Mammary epithelial cell (primary cell): ENCODE measurements at regions of chr1 and their contacts with region 1.

Region 1: GRCh38 chr1:150176593-150176992 is 26.9 kb downstream of the PLEKHO1 start:
- DNase-seq: no peak
- H3K4me3 ChIP-seq: no peak overlapping the region
- H3K27ac ChIP-seq: no peak overlapping the region
- H3K4me1 ChIP-seq: no peaks in the 10 kb centered on the region
- H3K27me3 ChIP-seq: no peaks in the 10 kb centered on the region
- CTCF ChIP-seq: no peak

Region 2: DNA sequence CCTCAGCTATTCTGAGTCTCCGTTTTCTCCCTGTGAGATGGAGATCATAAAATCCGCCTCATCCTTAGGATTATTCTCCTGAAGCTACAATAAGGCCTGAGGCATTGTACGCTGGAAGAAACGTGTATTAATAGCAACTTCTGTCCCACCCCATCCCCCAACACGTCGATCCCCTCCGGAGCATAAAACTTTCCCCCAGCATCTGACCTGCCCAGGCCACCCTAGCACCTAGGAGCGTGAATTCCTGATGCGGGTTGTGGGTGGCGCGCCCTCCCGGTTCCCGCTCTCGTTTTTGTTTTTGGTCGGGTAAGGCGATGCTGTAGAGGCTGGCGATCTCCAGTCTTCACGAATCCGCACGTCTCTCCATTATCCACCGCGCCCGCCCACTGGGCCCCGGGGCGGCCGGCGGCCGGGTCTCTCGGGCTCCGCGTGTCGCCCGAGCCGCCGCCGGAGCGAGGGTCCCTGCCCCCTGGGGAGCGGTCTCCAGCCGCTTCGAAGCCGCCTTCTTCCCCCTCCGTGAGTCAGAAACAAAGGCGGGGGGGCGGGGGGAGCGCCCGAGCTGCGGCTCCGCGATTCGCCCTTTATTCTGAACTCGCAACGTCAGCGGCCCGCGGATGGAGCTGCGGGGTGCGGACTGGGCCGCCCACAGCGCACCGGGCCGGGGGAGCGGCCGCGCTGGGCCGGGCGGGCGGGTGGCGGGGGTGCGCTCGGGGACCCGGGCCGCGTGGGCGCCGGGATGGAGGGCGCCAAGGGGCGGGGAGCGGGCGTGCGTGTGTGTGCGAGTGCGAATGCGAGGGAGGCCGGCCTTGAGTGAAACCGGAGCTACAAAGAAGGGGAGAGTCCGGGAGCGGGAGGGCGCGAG is 27.1 kb before region 1 on chr1 and contains the start of gene PLEKHO1:
- CTCF ChIA-PET with region 1: no interaction called
- dilution Hi-C with region 1: loop called (anchors 5 kb)
- in situ Hi-C with region 1: no loop called
- intact Hi-C with region 1: no loop called
- DNase-seq: peak; percentile 71
- H3K4me3 ChIP-seq: peak within 1 kb of the TSS; percentile 58 to 61 (median 60)
- H3K27ac ChIP-seq: no peak within 1 kb of the TSS
- H3K4me1 ChIP-seq: peaks cover 7% of the 10 kb centered on the region
- H3K27me3 ChIP-seq: no peaks in the 10 kb centered on the region
- CTCF ChIP-seq: no peak
- total RNA-seq, gene PLEKHO1: 3.1 to 3.3 TPM

Region 3: DNA sequence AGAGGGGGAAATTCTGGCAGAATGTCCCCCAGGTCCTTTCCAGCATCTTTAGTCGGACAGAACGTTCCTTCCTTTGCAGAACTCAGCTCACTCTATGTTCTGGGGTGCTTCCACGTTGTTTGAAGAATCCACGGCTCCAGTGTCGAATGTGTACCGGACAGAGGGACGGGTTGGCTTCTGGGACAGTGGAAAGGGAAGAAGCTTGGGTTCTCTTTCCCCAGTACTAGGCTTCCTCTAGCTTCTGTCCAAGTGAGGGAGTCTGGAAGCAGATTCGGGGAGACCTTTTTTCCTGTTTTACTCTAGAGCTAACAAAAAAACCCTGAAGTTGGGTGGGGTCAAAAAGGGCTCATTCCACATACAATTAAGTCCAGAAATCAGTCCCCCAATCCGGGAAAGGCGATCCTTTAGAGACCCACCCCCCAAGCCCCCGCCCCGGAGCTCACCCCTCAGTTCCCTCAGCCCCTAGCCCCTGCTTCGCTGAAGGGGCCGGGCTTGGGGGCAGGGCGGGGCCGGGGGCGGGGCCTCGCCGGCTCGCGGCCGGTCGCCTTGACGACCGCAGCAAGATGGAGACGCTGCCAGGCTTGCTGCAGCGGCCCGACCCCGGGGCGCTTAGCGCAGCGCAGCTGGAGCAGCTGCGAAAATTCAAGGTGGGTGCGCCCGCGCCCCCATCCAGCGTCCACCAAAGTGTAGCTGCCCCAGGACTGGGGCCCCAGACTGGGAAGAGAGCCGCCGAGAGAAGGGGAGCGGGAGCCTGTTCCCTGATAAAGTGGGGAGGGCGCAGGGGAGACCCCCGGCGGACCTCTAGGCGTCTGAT is 1544.6 kb after region 1 on chr1 and contains the start of gene RIIAD1:
- CTCF ChIA-PET with region 1: no interaction called
- dilution Hi-C with region 1: no loop called
- in situ Hi-C with region 1: no loop called
- intact Hi-C with region 1: no loop called
- DNase-seq: no peak
- H3K4me3 ChIP-seq: peak within 1 kb of the TSS in 1 of 3 experiments; percentile 17
- H3K27ac ChIP-seq: no peak within 1 kb of the TSS
- H3K4me1 ChIP-seq: peaks cover 4% of the 10 kb centered on the region
- H3K27me3 ChIP-seq: peaks cover 11% of the 10 kb centered on the region
- CTCF ChIP-seq: no peak
- total RNA-seq, gene RIIAD1: not detected